ENCODE measurements at regions of chr15 and their contacts with region 1.

Region 1: DNA sequence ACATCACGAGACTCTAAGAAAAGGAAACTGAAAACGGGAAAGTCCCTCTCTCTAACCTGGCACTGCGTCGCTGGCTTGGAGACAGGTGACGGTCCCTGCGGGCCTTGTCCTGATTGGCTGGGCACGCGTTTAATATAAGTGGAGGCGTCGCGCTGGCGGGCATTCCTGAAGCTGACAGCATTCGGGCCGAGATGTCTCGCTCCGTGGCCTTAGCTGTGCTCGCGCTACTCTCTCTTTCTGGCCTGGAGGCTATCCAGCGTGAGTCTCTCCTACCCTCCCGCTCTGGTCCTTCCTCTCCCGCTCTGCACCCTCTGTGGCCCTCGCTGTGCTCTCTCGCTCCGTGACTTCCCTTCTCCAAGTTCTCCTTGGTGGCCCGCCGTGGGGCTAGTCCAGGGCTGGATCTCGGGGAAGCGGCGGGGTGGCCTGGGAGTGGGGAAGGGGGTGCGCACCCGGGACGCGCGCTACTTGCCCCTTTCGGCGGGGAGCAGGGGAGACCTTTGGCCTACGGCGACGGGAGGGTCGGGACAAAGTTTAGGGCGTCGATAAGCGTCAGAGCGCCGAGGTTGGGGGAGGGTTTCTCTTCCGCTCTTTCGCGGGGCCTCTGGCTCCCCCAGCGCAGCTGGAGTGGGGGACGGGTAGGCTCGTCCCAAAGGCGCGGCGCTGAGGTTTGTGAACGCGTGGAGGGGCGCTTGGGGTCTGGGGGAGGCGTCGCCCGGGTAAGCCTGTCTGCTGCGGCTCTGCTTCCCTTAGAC is at the start of gene B2M:
- DNase-seq: peak; percentile 96
- ATAC-seq: peak; percentile 77
- H3K4me3 Mint-ChIP-seq: peak within 1 kb of the TSS; percentile 92
- H3K27ac Mint-ChIP-seq: peak within 1 kb of the TSS; percentile 100
- H3K4me1 Mint-ChIP-seq: peaks cover 38% of the 10 kb centered on the region
- H3K27me3 Mint-ChIP-seq: no peaks in the 10 kb centered on the region
- total RNA-seq, gene B2M: 7,848 to 8,493 TPM

Region 2: GRCh38 chr15:44536962-44537734 is 174.4 kb before region 1 on chr15 and contains the start of gene EIF3J:
- POLR2A ChIA-PET with region 1: interaction called, 10 read pairs
- DNase-seq: peak; percentile 97
- ATAC-seq: peak; percentile 95
- H3K4me3 Mint-ChIP-seq: peak within 1 kb of the TSS; percentile 87
- H3K27ac Mint-ChIP-seq: peak within 1 kb of the TSS; percentile 88
- H3K4me1 Mint-ChIP-seq: peaks cover 39% of the 10 kb centered on the region
- H3K27me3 Mint-ChIP-seq: no peaks in the 10 kb centered on the region
- total RNA-seq, gene EIF3J: 63.6 to 69.0 TPM

Region 3: GRCh38 chr15:44584162-44584749 is 127.3 kb before region 1 on chr15:
- POLR2A ChIA-PET with region 1: interaction called, 11 read pairs
- DNase-seq: peak; percentile 57
- ATAC-seq: peak; percentile 80
- H3K4me3 Mint-ChIP-seq: no peak overlapping the region
- H3K27ac Mint-ChIP-seq: no peak overlapping the region
- H3K4me1 Mint-ChIP-seq: peaks cover 3% of the 10 kb centered on the region
- H3K27me3 Mint-ChIP-seq: no peaks in the 10 kb centered on the region

Region 4: GRCh38 chr15:44606740-44607139 is 104.8 kb before region 1 on chr15:
- POLR2A ChIA-PET with region 1: no interaction called
- DNase-seq: no peak
- ATAC-seq: no peak
- H3K4me3 Mint-ChIP-seq: no peak overlapping the region
- H3K27ac Mint-ChIP-seq: no peak overlapping the region
- H3K4me1 Mint-ChIP-seq: no peaks in the 10 kb centered on the region
- H3K27me3 Mint-ChIP-seq: no peaks in the 10 kb centered on the region

Region 5: GRCh38 chr15:44676676-44677075 is 34.9 kb before region 1 on chr15:
- POLR2A ChIA-PET with region 1: interaction called, 1,234 read pairs
- DNase-seq: no peak
- ATAC-seq: peak; percentile 45
- H3K4me3 Mint-ChIP-seq: peak overlapping the region; percentile 73
- H3K27ac Mint-ChIP-seq: peak overlapping the region; percentile 85
- H3K4me1 Mint-ChIP-seq: peaks cover 61% of the 10 kb centered on the region
- H3K27me3 Mint-ChIP-seq: no peaks in the 10 kb centered on the region

Region 6: GRCh38 chr15:44692659-44693058 is 18.9 kb before region 1 on chr15:
- POLR2A ChIA-PET with region 1: interaction called, 61 read pairs
- DNase-seq: no peak
- ATAC-seq: no peak
- H3K4me3 Mint-ChIP-seq: no peak overlapping the region
- H3K27ac Mint-ChIP-seq: no peak overlapping the region
- H3K4me1 Mint-ChIP-seq: peaks cover 30% of the 10 kb centered on the region
- H3K27me3 Mint-ChIP-seq: no peaks in the 10 kb centered on the region

Region 7: DNA sequence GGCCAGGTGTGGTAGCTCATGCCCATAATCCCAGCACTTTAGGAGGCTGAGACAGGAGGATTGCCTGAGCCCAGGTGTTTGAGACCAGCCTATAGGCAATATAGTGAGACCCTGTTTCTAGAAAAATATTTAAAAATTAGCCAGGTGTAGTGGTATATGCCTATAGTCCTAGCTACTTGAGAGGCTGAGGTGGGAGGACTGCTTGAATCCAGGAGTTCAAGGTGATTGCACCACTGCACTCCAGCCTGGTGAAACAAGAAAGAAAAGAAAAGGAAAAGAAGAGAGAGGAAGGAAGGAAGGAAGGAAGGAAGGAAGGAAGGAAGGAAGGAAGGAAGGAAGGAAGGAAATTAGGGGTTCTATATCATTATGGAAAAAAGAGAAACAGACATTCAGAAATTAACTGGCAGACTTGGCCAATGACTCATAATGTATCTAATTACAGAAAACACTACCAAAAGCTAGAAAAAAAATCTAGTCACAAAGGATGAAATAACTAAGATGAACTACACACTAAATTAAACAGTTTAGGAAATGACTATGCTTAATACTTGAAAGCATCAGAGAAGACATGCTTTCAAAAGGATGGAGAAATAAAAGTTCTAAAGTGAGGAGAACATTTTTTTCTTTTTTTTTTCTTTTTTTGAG is 199.6 kb after region 1 on chr15:
- POLR2A ChIA-PET with region 1: no interaction called
- DNase-seq: no peak
- ATAC-seq: no peak
- H3K4me3 Mint-ChIP-seq: no peak overlapping the region
- H3K27ac Mint-ChIP-seq: no peak overlapping the region
- H3K4me1 Mint-ChIP-seq: no peaks in the 10 kb centered on the region
- H3K27me3 Mint-ChIP-seq: peaks cover 5% of the 10 kb centered on the region